ENCODE measurements at regions of chr15 and their contacts with region 1.

Region 1: DNA sequence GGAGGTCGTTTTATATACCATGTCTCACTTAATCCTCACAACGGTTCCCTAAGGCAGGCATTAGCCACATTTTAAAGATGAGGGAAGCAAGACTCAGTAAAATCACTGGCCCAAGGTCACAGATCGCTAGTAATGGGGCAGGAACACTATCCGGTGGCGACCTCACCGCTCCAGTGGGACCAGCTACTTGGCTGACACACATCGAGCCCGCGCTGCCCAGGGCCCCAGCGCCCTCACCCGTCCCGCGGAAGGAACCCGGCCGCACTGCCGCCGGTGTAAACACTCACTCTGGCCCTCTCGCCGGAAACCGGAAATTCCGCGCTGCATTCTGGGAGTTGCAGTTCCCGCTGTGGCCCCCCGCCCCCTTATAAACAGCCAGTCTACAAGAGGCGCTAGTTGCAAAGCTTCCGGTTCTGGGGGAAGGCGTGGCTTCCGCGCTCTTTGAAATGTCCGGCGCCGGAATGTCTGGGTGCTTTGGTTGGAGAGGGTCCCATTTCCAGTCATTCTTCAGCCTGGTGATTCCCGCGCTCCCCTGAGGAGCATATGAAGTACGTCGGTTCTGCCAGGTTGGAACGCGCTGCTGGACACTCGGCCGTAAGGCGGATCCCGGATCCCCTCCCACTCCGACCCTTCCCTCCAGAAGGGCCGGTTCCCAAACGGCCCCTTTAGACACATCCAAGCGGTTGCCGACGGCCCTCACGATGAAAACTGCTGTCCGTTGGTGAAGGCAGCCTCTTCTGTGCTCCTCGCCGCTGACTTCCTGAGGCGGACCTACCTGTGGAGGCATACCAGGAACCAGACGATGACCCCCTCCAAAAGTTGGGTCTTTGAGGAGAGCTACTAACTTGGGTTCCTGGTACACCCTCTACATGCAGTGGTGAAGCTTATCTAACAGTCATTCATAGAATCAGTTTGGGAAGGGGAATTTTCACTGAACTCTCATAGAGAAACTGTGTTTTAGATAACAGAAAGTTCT is at the start of gene UBL7:
- DNase-seq: peak; percentile 94
- H3K4me3 ChIP-seq: peak within 1 kb of the TSS; percentile 77 to 78
- H3K27ac ChIP-seq: peak within 1 kb of the TSS; percentile 66 to 84
- H3K4me1 ChIP-seq: peaks cover 0 to 6% of the 10 kb centered on the region in 2 experiments; a peak in 1 of 4 replicates
- H3K27me3 ChIP-seq: no peaks in the 10 kb centered on the region
- CTCF ChIP-seq: peak; percentile 27; the same call in 1 of the 2 replicates
- EP300 ChIP-seq: peak in 1 of 2 experiments; percentile 34; a peak in 1 of 4 replicates
- RAD21 ChIP-seq: peak; percentile 35
- polyA plus RNA-seq, gene UBL7: 81.1 and 89.7 TPM in 2 replicates

Region 2: DNA sequence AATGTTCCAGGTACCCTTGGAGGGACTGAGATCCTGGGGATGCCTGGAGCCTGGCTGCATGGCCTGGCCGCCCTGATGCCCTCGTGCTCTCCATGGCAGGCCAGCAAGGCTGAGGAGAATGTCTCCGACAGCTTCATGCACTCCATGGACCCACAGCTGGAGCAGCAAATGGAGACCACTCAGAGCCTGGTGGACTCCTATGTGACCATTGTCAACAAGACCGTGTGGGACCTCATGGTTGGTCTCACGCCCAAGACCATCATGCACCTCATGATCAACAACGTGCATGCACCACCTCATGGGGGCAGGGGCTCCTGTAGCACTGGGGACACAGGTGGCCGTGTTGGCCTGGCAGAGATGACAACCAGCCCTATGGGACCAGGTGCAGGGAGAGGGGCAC is 398.5 kb before region 1 on chr15:
- CTCF ChIA-PET with region 1: no interaction called
- POLR2A ChIA-PET with region 1: no interaction called
- DNase-seq: no peak
- H3K4me3 ChIP-seq: no peak overlapping the region
- H3K27ac ChIP-seq: no peak overlapping the region
- H3K4me1 ChIP-seq: no peaks in the 10 kb centered on the region; a peak in 1 of 4 replicates
- H3K27me3 ChIP-seq: no peaks in the 10 kb centered on the region
- CTCF ChIP-seq: no peak
- EP300 ChIP-seq: no peak
- RAD21 ChIP-seq: no peak

Region 3: DNA sequence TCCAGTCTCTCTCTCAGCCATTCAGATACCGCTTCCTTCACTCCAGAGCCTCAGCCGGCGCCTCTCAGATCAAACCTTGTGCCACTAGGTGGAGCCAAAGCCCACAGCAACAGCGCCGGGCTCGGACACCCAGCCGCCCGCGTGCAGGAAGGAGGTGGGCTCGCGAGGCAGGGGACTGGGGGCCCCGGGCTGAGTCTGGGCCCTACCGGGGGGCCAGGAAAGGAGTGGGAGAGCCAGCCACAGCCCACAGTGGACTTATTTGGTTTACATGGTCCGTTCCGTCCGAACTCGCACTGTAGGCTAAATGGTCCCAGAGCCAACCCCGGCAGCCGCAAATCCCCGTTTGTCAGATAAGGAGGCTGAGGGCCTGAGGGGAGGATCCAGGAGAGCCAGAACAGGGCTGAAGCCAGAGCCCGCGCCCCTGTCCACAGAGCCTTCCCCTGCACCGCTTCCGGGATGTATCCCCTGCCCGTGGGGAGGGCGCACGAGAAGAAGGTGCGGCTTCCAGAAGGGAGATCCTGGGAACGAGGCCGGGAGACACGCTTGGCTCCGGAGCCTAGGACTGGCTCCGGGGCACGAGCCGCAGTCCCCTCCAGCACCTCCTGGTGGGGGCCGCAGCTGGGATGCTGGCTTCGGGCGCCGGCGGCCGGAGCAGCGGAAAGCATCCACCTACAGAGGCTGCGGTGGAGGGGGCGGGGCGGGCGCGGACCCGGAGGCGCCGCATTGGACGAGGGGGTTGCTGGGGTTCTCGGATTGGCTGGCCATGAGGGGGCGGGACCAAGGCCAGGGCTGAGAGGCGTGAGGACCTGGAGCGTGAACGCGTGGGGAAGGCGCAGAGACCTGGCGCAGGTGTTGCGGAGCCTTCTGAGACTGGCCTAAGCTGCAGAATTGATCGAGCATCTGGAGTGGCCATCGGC is 87.2 kb before region 1 on chr15:
- CTCF ChIA-PET with region 1: interaction called, 779 read pairs
- POLR2A ChIA-PET with region 1: interaction called, 5 read pairs
- DNase-seq: peak; percentile 99
- H3K4me3 ChIP-seq: peak overlapping the region; percentile 67 to 99
- H3K27ac ChIP-seq: peak overlapping the region in 1 of 2 experiments; percentile 93; a peak in 2 of 4 replicates
- H3K4me1 ChIP-seq: peaks cover 0 to 12% of the 10 kb centered on the region in 2 experiments; a peak in 1 of 4 replicates
- H3K27me3 ChIP-seq: peaks cover 30% of the 10 kb centered on the region
- CTCF ChIP-seq: peak; percentile 90
- EP300 ChIP-seq: no peak; a peak in 1 of 4 replicates
- RAD21 ChIP-seq: peak; percentile 93

Region 4: DNA sequence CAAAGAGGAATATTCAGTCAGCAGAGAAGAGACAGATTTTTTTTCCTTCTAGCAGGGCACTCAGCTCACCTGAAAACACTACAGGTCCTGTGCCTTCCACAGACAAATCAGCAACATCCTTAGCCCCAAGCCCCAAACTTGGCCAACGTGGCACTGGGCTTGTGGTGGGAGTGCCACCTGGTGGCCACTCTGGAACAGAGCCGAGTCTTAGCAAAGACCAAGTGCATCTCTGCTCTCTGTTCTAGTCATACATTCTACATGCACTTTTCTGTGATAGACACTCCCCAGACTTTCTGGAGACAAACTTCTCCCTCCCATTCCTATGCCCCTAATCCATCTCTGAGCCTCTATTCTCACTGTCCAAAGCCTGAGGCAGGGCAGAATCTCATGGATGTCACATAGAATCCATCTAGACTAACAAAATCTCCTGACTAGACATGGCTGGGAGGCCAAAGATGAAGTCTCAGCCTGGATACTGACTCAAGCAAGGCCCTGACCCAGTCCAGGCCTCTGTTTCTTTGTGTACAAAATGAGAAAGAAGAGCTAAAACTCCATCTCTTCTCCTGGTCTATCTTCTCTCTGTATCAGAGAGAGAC is 22.3 kb before region 1 on chr15:
- CTCF ChIA-PET with region 1: interaction called, 11 read pairs
- POLR2A ChIA-PET with region 1: interaction called, 7 read pairs
- DNase-seq: peak; percentile 85
- H3K4me3 ChIP-seq: no peak overlapping the region; a peak in 1 of 4 replicates
- H3K27ac ChIP-seq: no peak overlapping the region
- H3K4me1 ChIP-seq: peaks cover 0 to 14% of the 10 kb centered on the region in 2 experiments; a peak in 1 of 4 replicates
- H3K27me3 ChIP-seq: no peaks in the 10 kb centered on the region
- CTCF ChIP-seq: peak; percentile 92
- EP300 ChIP-seq: no peak
- RAD21 ChIP-seq: peak; percentile 94

Region 5: GRCh38 chr15:74449643-74450205 is 11.4 kb before region 1 on chr15:
- CTCF ChIA-PET with region 1: interaction called, 4 read pairs
- POLR2A ChIA-PET with region 1: interaction called, 10 read pairs
- DNase-seq: no peak
- H3K4me3 ChIP-seq: no peak overlapping the region
- H3K27ac ChIP-seq: no peak overlapping the region
- H3K4me1 ChIP-seq: no peaks in the 10 kb centered on the region
- H3K27me3 ChIP-seq: no peaks in the 10 kb centered on the region
- CTCF ChIP-seq: no peak
- EP300 ChIP-seq: no peak
- RAD21 ChIP-seq: no peak

Measured in SK-N-SH (cell line).